ENCODE measurements at regions of chrX and their contacts with region 1.

Region 1: GRCh38 chrX:72126539-72127140 is 5.1 kb downstream of the RTL5 start:
- DNase-seq: peak; percentile 67
- ATAC-seq: peak; percentile 64
- H3K4me3 Mint-ChIP-seq: no peak overlapping the region
- H3K27ac Mint-ChIP-seq: no peak overlapping the region
- H3K4me1 Mint-ChIP-seq: peaks cover 28% of the 10 kb centered on the region
- H3K27me3 Mint-ChIP-seq: no peaks in the 10 kb centered on the region
- CTCF ChIP-seq: no peak

Region 2: GRCh38 chrX:71998836-71999509 is 127.7 kb before region 1 on chrX:
- CTCF ChIA-PET with region 1: interaction called, 26 read pairs
- POLR2A ChIA-PET with region 1: interaction called, 4 read pairs
- intact Hi-C with region 1: loop called (anchors 1 kb)
- DNase-seq: no peak
- ATAC-seq: peak; percentile 60
- H3K4me3 Mint-ChIP-seq: no peak overlapping the region
- H3K27ac Mint-ChIP-seq: no peak overlapping the region
- H3K4me1 Mint-ChIP-seq: no peaks in the 10 kb centered on the region
- H3K27me3 Mint-ChIP-seq: peaks cover 10% of the 10 kb centered on the region
- CTCF ChIP-seq: no peak

Region 3: DNA sequence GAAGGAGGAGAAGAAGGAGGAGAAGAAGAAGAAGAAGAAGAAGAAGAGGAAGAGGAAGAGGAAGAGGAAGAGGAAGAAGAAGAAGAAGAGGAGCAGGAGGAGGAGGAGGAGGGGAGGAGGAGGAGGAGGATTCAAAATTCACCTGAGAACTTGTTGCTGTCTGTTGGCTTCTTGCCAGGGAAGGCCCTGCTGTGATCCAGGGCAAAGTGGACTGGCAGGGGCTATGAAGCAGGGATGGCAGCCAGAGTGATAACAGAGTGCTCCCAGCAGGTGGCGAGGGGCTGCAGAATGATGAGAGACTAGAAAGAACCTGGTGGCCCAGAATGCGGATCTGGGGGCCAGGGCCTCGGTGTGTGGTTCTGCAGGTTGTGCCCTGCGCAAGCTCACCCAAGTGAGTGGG is 77.7 kb before region 1 on chrX:
- CTCF ChIA-PET with region 1: interaction called, 4 read pairs
- POLR2A ChIA-PET with region 1: no interaction called
- intact Hi-C with region 1: loop called (anchors 1 kb)
- DNase-seq: no peak
- ATAC-seq: no peak
- H3K4me3 Mint-ChIP-seq: no peak overlapping the region
- H3K27ac Mint-ChIP-seq: no peak overlapping the region
- H3K4me1 Mint-ChIP-seq: no peaks in the 10 kb centered on the region
- H3K27me3 Mint-ChIP-seq: peaks cover 3% of the 10 kb centered on the region
- CTCF ChIP-seq: no peak

Region 4: DNA sequence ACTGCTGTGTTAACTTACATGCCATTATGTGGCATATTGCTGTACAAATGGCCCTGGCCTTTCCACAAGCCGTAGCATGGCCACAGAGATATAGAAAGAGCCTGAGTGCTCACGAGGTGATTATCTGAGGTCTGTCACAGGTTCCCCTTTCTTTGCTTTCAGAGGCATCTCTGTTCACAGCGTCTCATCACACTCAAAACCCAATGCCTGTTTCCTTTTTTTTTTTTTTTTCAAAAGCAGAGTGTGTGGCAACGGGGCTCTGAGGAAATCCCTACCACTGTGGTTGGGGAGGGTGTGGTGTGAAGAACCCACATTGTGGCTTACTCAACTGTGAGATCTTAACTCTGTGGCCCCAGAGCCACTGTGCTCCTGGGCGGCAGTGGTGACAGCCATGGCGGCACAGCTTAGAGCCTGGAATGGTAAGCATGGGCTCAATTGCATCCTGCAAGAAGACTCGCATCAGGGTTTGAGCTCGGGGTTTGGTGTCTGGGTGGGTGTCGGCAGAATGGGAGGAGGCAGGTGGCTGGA is 25.8 kb before region 1 on chrX:
- CTCF ChIA-PET with region 1: no interaction called
- POLR2A ChIA-PET with region 1: no interaction called
- intact Hi-C with region 1: loop called (anchors 1 kb)
- DNase-seq: peak; percentile 35
- ATAC-seq: peak; percentile 80
- H3K4me3 Mint-ChIP-seq: peak overlapping the region; percentile 38
- H3K27ac Mint-ChIP-seq: peak overlapping the region; percentile 79
- H3K4me1 Mint-ChIP-seq: peaks cover 62% of the 10 kb centered on the region
- H3K27me3 Mint-ChIP-seq: peaks cover 2% of the 10 kb centered on the region
- CTCF ChIP-seq: no peak

Region 5: DNA sequence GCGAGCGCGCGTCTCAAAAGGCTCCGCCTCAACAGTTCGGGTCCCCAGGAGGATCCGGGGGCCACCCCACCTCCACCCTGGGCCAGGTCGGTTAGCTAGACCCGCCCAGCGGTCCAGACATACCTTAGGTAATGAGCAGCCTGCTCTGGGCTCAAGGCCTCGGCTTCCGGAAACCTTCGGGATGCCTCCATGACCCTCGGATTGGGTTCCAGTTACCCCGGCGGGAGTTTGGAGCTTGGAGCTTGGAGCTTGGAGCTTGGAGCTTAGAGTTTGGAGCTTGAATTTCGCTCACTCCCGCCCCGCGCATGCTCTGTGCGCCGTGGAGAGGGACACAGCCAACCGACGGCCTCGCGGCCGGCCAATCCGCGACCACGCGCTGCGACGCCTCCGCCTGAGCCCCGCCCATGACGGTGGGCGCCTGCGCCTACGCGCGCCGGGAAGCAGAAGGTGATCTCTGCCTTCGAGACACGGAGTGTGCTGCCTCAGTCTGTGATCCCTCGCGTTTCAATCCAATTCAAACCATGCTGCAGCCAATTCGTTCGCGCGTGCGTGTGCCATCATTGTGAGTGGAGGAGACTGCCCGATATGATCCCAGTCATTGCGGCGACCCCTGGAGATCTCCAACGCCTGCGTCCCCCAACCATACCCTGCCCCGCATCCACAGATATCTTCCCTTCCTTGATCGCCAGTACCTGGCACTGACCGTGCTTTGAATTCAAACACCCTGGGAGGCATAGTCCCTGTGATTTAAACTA is 112.3 kb after region 1 on chrX and contains the start of gene ERCC6L:
- CTCF ChIA-PET with region 1: no interaction called
- POLR2A ChIA-PET with region 1: no interaction called
- intact Hi-C with region 1: loop called (anchors 5 kb)
- DNase-seq: peak; percentile 76
- ATAC-seq: peak; percentile 99
- H3K4me3 Mint-ChIP-seq: peak within 1 kb of the TSS; percentile 80
- H3K27ac Mint-ChIP-seq: peak within 1 kb of the TSS; percentile 79
- H3K4me1 Mint-ChIP-seq: peaks cover 3% of the 10 kb centered on the region
- H3K27me3 Mint-ChIP-seq: no peaks in the 10 kb centered on the region
- CTCF ChIP-seq: no peak
- total RNA-seq, gene ERCC6L: 0.91 and 1.1 TPM in 2 replicates

Measured in activated B cell treated with CpG ODN at 0.5 μM for 24 hours (primary cell).